ENCODE measurements at regions of chr17 and their contacts with region 1.

Region 1: GRCh38 chr17:77429919-77430752 is 289.4 kb downstream of the SEC14L1 start:
- H3K4me3 ChIP-seq: no peak overlapping the region
- H3K27ac ChIP-seq: no peak overlapping the region
- H3K4me1 ChIP-seq: peaks cover 2% of the 10 kb centered on the region; the same call in 1 of the 2 replicates
- CTCF ChIP-seq: peak; percentile 55; the same call in 1 of the 2 replicates

Region 2: GRCh38 chr17:77331301-77331864 is 98.8 kb before region 1 on chr17:
- CTCF ChIA-PET with region 1: interaction called, 42 read pairs
- POLR2A ChIA-PET with region 1: no interaction called
- H3K4me3 ChIP-seq: peak overlapping the region; percentile 19; the same call in 1 of the 2 replicates
- H3K27ac ChIP-seq: no peak overlapping the region
- H3K4me1 ChIP-seq: 0 out of 2 replicates have a peak, but pooled peaks cover 2% of the 10 kb centered on the region
- CTCF ChIP-seq: peak; percentile 98

Region 3: GRCh38 chr17:77441130-77441920 is 11.2 kb after region 1 on chr17:
- CTCF ChIA-PET with region 1: interaction called, 13 read pairs
- POLR2A ChIA-PET with region 1: interaction called, 3 read pairs
- H3K4me3 ChIP-seq: no peak overlapping the region
- H3K27ac ChIP-seq: no peak overlapping the region
- H3K4me1 ChIP-seq: peaks cover 12% of the 10 kb centered on the region
- CTCF ChIP-seq: no peak

Region 4: DNA sequence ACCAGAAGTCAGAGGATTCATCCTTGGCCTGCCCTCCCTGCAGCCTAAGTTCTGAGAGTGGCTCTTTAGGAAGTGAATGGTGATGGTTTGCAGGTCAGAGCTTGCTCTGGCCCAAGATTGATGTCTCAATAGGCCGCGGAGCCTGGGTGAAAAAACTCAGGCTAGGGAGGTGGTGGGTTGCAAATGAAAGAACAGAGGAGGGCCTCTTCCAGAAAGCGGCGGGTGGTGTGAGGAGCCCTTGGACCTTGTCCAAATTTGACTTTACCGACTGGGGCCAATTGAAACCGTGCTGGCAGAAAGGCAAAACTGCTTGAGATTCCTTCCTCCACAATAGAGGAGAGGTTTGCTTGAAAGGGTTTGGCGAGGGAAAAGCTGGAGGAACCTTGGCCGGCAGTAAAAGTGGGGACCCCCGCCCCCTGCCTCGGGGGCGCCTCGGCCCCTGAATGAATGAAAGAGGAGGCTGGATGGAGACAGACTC is 41.9 kb after region 1 on chr17:
- CTCF ChIA-PET with region 1: interaction called, 17 read pairs
- POLR2A ChIA-PET with region 1: no interaction called
- H3K4me3 ChIP-seq: no peak overlapping the region
- H3K27ac ChIP-seq: peak overlapping the region; percentile 80
- H3K4me1 ChIP-seq: peaks cover 25% of the 10 kb centered on the region
- CTCF ChIP-seq: no peak

Region 5: DNA sequence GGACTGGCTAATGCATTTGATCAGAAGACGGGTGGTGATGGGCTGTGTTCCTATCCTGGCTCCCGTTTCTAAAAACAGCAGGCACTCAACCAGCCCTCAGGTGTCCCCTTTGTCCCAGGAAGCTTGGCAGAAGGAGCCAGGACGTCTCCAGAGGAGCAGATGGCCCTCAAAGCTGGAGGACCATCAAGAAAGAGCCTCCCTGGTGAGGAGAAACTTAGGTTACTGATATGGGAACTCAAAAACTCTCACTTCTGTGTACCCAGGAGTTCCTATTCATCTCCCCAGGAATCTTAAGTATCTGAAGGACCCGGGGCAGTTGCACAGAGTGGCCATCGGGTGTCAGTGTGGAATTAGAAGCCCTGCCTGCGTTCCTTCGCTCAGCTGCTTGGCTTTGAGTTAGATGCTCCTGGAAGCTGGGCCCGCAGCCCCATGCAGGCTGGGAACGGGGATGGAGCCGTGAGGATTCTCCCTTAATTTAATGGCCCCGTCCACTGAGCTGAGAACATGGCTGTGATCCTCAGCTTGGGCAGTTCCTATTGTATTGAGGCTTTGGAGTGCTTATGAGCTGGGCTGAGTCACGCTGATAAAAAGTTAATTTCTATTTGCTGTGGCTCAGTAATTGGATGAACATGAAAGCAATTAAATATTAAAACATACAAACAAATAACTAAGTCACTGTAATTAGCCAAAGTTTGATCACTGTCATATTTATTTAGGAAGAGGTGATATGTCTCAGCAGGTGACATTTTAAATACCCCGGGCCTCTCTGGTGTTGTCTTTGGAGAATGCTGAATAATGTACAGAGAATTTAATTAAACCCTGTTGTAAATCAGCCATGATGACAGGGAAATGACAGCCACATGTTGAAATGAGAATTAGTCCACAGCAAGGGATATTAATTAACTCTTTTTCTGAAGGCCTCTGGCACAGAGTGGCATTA is 112.7 kb after region 1 on chr17:
- CTCF ChIA-PET with region 1: interaction called, 11 read pairs
- POLR2A ChIA-PET with region 1: no interaction called
- H3K4me3 ChIP-seq: no peak overlapping the region
- H3K27ac ChIP-seq: no peak overlapping the region; the same call in 1 of the 2 replicates
- H3K4me1 ChIP-seq: peaks cover 13% of the 10 kb centered on the region
- CTCF ChIP-seq: peak; percentile 75; the same call in 1 of the 2 replicates